ENCODE measurements at regions of chr11 and their contacts with region 1.

Region 1: GRCh38 chr11:121591405-121592033 is 138.8 kb upstream of the SORL1-AS1 start:
- DNase-seq: peak; percentile 78
- ATAC-seq: peak; percentile 86
- H3K4me3 ChIP-seq: no peak overlapping the region
- H3K27ac ChIP-seq: no peak overlapping the region
- H3K4me1 ChIP-seq: 0 out of 2 replicates have a peak, but pooled peaks cover 2% of the 10 kb centered on the region
- H3K27me3 ChIP-seq: no peaks in the 10 kb centered on the region
- CTCF ChIP-seq: peak; percentile 90

Region 2: GRCh38 chr11:121249039-121249663 is 342.4 kb before region 1 on chr11:
- CTCF ChIA-PET with region 1: no interaction called
- POLR2A ChIA-PET with region 1: no interaction called
- in situ Hi-C with region 1: no loop called
- intact Hi-C with region 1: loop called (anchors 1 kb)
- DNase-seq: peak; percentile 17
- ATAC-seq: peak; percentile 71; the same call in 1 of the 2 replicates
- H3K4me3 ChIP-seq: no peak overlapping the region
- H3K27ac ChIP-seq: no peak overlapping the region
- H3K4me1 ChIP-seq: no peaks in the 10 kb centered on the region
- H3K27me3 ChIP-seq: no peaks in the 10 kb centered on the region
- CTCF ChIP-seq: peak; percentile 85

Region 3: GRCh38 chr11:121318848-121319834 is 272.4 kb before region 1 on chr11:
- CTCF ChIA-PET with region 1: interaction called, 8 read pairs
- POLR2A ChIA-PET with region 1: no interaction called
- in situ Hi-C with region 1: no loop called
- intact Hi-C with region 1: loop called (anchors 1 kb)
- DNase-seq: peak; percentile 38
- ATAC-seq: peak; percentile 68; the same call in 1 of the 2 replicates
- H3K4me3 ChIP-seq: no peak overlapping the region
- H3K27ac ChIP-seq: no peak overlapping the region
- H3K4me1 ChIP-seq: no peaks in the 10 kb centered on the region
- H3K27me3 ChIP-seq: no peaks in the 10 kb centered on the region; the same call in 1 of the 2 replicates
- CTCF ChIP-seq: peak; percentile 87

Region 4: DNA sequence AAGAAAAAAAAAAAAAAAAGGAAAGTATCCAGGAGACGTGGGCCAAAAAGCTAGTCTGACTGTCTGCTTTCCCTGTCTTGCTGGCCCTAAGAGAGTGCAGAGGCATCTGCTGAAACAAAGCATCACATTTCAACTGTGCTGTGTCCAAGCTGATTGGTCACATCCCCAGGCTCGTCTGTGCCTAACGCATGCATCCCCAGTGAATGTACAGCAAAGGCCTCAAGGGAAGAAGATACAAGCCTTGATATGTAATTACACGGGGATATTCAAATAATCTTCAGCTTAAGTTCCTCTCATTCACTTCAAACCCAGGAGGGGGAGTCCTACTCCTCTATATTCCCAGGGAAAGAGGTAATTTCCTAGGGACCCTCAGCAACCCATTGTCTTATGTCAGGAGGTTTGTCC is 144.8 kb before region 1 on chr11:
- CTCF ChIA-PET with region 1: interaction called, 12 read pairs
- POLR2A ChIA-PET with region 1: no interaction called
- in situ Hi-C with region 1: no loop called
- intact Hi-C with region 1: loop called (anchors 2 kb)
- DNase-seq: no peak
- ATAC-seq: no peak
- H3K4me3 ChIP-seq: no peak overlapping the region
- H3K27ac ChIP-seq: no peak overlapping the region
- H3K4me1 ChIP-seq: peaks cover 10% of the 10 kb centered on the region
- H3K27me3 ChIP-seq: no peaks in the 10 kb centered on the region
- CTCF ChIP-seq: peak; percentile 51

Region 5: DNA sequence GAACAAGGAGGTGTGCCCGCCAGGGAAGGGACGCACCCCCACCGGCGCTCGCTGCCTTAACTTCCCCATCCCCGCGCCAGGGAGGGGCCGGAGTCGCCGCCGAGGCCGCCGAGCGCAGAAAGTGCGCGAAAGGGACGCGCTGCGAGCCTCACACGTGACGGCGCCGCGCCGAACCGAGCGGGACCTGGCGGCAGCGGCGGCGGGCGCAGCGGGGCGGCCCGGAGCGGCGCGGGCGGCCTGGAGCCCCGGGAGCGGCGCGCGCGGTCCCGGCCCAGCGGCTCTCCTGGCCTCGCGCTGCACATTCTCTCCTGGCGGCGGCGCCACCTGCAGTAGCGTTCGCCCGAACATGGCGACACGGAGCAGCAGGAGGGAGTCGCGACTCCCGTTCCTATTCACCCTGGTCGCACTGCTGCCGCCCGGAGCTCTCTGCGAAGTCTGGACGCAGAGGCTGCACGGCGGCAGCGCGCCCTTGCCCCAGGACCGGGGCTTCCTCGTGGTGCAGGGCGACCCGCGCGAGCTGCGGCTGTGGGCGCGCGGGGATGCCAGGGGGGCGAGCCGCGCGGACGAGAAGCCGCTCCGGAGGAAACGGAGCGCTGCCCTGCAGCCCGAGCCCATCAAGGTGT is 139.4 kb before region 1 on chr11 and contains the start of gene SORL1:
- CTCF ChIA-PET with region 1: interaction called, 12 read pairs
- POLR2A ChIA-PET with region 1: no interaction called
- in situ Hi-C with region 1: no loop called
- intact Hi-C with region 1: loop called (anchors 2 kb)
- DNase-seq: no peak
- ATAC-seq: peak; percentile 97
- H3K4me3 ChIP-seq: peak within 1 kb of the TSS; percentile 76 to 98
- H3K27ac ChIP-seq: peak within 1 kb of the TSS; percentile 81
- H3K4me1 ChIP-seq: peaks cover 28% of the 10 kb centered on the region
- H3K27me3 ChIP-seq: no peaks in the 10 kb centered on the region
- CTCF ChIP-seq: peak; percentile 94
- total RNA-seq, gene SORL1: 36.3 TPM

Region 6: DNA sequence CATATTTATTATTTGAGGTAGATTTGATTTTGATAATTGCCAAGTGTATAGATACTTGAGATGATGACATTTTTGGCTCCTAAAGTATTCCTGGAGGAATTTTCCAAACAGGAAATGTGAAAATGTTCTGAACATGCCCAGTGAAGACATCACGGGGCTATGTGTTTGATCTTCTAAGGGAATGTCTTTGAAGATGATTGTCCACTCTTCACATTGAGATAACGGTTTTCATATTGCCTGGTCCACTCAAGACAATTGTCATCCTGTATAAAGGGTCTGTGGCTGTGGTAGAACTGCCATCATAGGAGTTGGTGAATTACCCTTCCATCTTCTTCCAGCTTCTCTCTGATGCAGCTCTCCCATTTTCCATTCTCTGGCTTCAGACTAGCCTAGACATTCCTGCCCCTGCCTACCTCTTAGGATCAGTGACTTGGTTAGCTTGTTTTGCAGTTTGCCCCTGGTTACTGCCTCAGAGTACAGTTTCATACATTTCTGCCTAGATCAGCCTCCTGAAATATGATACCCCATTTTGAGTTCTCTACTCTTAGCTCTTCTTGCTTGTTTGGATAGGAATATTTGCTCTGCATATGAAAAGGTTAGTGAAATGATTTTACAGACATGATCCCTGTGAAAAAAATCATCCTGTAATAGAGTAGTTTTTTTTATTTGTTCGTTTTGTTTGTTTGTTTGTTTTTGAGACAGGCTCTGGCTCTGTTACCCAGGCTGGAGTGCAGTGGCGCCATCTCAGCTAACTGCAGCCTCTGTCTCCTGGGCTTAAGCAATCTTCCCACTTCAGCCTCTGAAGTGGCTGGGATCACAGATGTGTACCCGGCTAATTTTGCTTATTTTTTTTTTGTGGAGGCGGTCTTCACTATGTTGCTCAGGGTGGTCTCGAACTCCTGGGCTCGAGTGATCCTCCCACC is 27.4 kb before region 1 on chr11:
- CTCF ChIA-PET with region 1: no interaction called
- POLR2A ChIA-PET with region 1: no interaction called
- in situ Hi-C with region 1: no loop called
- intact Hi-C with region 1: no loop called
- DNase-seq: no peak
- ATAC-seq: no peak
- H3K4me3 ChIP-seq: no peak overlapping the region
- H3K27ac ChIP-seq: no peak overlapping the region
- H3K4me1 ChIP-seq: no peaks in the 10 kb centered on the region
- H3K27me3 ChIP-seq: no peaks in the 10 kb centered on the region
- CTCF ChIP-seq: no peak

Measured in Panc1 (cell line).